ENCODE measurements at regions of chr7 and their contacts with region 1.

Region 1: DNA sequence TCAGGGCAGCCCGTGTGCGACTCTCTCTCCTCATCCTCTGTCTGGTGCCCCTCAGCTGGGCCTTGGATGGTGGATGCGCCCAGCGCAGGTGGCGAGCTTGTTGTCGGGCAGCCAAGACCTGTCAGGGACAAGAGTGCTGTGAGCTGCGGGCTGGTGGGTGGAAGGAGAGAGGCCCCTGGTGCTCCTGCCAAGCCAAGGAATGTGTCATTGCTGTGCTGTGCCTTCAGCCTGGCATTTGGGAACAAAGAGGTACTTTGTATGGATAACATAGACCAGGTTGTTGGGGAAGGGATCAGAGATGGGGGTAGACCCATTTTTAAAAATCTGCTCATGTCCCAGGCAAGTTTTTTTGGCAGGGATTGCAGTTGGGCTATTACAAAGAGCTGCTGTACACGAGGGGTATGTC is 120.9 kb downstream of the PKD1L1 start:
- ATAC-seq: peak in 1 of 8 experiments; percentile 38
- H3K4me3 ChIP-seq: no peak overlapping the region
- H3K27ac ChIP-seq: no peak overlapping the region
- H3K4me1 ChIP-seq: no peaks in the 10 kb centered on the region

Region 2: DNA sequence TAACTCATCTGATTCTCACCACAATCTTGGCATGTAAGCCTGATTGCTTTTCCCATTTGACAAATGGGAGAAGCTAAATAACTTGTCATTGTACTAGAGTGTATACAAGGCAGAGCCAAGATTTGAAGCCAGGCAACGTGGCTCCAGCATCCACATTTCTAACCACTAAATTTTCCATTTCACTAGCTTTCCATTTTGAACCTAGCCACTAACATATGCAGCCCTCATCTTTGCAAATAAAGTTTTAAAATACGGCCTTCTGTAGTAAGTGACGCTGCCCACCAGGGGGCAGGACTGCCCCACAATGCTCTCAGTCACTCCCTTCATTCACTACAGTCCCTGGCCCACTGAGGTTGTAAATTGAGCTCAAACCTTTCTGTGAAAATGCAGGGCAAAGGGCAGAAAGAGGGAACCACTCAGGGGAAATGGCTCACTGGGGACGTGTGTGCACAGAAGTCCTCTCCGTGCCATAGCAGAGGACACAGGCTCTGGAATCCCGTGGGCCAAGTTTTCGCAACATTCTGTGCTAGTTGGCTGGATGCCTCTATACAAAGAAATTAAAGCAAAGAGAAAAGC is 561.1 kb before region 1 on chr7:
- in situ Hi-C with region 1: loop called in 8 of 9 experiments (anchors 10 to 25 kb)
- ATAC-seq: peak; percentile 84 to 93 (median 88)
- H3K4me3 ChIP-seq: no peak overlapping the region
- H3K27ac ChIP-seq: no peak overlapping the region
- H3K4me1 ChIP-seq: no peaks in the 10 kb centered on the region

Region 3: DNA sequence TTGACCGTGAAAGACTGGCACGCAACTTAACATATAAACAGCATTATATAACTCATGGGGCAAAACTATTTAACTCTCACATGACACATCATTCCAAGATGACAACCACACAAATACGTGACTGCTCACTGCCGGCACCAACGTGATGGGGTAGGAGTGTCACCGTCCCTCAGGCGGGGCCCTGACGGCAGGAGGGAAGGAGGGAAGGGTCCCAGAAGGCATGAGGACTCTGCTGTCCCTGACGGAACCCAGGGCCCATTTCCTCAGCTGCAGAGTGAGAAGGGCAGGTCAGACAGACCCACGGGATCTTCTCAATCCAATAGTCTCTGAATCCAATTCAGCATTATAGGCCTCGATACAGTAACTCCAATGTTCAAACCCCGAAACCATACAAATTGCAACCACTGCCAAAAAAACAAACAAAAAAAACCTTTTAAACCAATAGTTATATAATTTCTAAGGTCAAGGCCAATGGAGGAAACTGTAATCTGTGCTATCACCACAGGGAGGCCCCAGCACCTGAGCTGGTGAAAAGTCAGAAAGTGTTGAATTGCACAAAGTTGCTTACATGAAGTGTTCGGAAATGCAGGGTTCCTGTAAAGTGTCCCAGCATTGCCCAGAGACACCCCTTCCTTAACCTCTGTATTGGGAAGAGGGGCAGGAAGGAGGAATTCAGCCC is 382.8 kb before region 1 on chr7:
- in situ Hi-C with region 1: loop called in 2 of 9 experiments (anchors 10 to 25 kb)
- ATAC-seq: peak in 3 of 8 experiments; percentile 49 to 63 (median 53)
- H3K4me3 ChIP-seq: no peak overlapping the region
- H3K27ac ChIP-seq: no peak overlapping the region
- H3K4me1 ChIP-seq: peaks cover 0 to 3% of the 10 kb centered on the region in 2 donors

Region 4: DNA sequence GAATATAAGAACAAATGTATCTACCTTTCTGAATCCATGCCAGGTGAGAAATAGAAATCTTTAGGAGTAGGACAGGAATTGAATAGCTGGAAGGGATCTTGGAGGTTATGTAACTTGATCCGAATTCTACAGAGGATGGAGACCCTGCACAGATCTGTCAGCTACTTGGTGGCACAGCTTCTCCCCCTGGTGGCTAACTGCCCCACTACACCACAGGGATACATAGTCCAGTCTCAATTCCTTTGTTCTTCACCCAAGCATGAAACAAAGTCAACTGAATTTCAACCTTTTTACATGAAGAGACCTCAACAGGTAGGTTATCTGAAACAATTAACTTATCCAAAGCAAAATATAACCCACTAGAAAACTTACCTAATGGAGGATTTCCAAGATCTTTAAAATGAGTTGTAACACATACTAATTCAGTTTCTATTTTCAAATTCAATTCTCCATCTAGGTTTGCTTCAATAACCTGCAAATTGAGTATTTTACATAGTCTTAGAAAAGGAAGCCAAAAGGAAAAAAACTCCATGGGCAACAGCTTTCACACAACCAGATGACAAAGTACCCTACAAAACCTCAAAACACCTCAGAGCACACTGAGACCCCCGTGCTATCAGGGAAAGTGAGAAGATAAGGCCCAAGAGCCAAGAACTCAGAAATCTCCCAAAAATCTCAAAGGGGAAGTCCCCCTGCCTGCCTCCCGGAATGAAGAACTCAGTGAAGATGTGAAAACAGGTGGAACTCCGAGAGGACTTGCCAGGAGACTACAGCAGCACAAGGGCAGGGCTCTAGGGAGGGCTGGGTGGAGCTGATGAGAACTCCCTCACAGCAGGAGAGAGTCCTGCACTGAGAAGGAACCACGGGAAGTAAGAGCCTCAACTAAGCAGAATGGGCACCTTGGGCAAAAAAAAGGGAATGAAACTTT is 141.8 kb after region 1 on chr7:
- in situ Hi-C with region 1: no loop called
- ATAC-seq: peak; percentile 77 to 98 (median 86)
- H3K4me3 ChIP-seq: no peak overlapping the region
- H3K27ac ChIP-seq: no peak overlapping the region
- H3K4me1 ChIP-seq: peaks cover 0 to 2% of the 10 kb centered on the region in 2 donors

Measured in motor neuron (in vitro differentiated cells).